K562 (cell line): ENCODE measurements at regions of chr21 and their contacts with region 1.

Region 1: DNA sequence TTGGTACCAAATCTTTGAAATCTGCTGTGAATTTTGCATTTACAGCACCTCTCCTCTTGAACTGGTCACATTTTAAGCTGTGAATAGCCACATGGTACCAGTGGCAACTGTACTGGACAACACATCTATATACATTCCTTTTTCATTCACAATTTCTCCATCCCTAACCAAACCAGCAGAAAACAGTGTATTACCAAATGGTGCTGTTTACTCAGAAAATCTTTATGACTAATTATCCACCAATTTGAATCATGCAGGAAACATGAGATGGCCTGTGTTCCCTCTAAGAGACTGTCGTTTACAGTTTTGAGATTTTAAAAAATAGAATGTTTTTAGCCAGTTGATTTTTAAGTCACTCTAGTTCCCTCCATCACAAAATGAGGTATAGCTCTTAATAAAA is 17.6 kb upstream of the CCT8 start:
- DNase-seq: no peak
- ATAC-seq: no peak
- H3K4me3 ChIP-seq: no peak overlapping the region
- H3K27ac ChIP-seq: no peak overlapping the region
- H3K4me1 ChIP-seq: no peaks in the 10 kb centered on the region
- H3K27me3 ChIP-seq: peaks cover 5 to 6% of the 10 kb centered on the region in 2 experiments; a peak in 3 of 5 replicates
- CTCF ChIP-seq: no peak
- EP300 ChIP-seq: no peak
- POLR2A ChIP-seq: no peak
- RAD21 ChIP-seq: no peak

Region 2: GRCh38 chr21:29164325-29164942 is 73.4 kb after region 1 on chr21:
- CTCF ChIA-PET with region 1: interaction called, 4 read pairs
- POLR2A ChIA-PET with region 1: interaction called, 3 read pairs
- in situ Hi-C with region 1: no loop called
- intact Hi-C with region 1: loop called (anchors 1 kb)
- DNase-seq: peak in 2 of 4 experiments; percentile 50 to 72
- ATAC-seq: peak; percentile 87
- H3K4me3 ChIP-seq: no peak overlapping the region
- H3K27ac ChIP-seq: no peak overlapping the region
- H3K4me1 ChIP-seq: no peaks in the 10 kb centered on the region
- H3K27me3 ChIP-seq: peaks cover 0 to 8% of the 10 kb centered on the region in 2 experiments; a peak in 3 of 5 replicates
- CTCF ChIP-seq: peak; percentile 63 to 86 (median 67)
- EP300 ChIP-seq: 0 out of 2 replicates have a peak, but pooled peaks have one; percentile 12
- POLR2A ChIP-seq: no peak
- RAD21 ChIP-seq: peak; percentile 94 to 96

Region 3: GRCh38 chr21:29342363-29342957 is 251.4 kb after region 1 on chr21:
- CTCF ChIA-PET with region 1: interaction called, 16 read pairs
- POLR2A ChIA-PET with region 1: no interaction called
- in situ Hi-C with region 1: no loop called
- intact Hi-C with region 1: loop called (anchors 10 kb)
- DNase-seq: no peak
- ATAC-seq: no peak
- H3K4me3 ChIP-seq: no peak overlapping the region
- H3K27ac ChIP-seq: no peak overlapping the region
- H3K4me1 ChIP-seq: peaks cover 2 to 7% of the 10 kb centered on the region in 2 experiments; a peak in 2 of 5 replicates
- H3K27me3 ChIP-seq: no peaks in the 10 kb centered on the region
- CTCF ChIP-seq: no peak
- EP300 ChIP-seq: no peak
- POLR2A ChIP-seq: no peak
- RAD21 ChIP-seq: no peak